ENCODE measurements at regions of chr1 and their contacts with region 1.

Region 1: GRCh38 chr1:14970115-14970798 is 183.3 kb upstream of the TMEM51 start:
- DNase-seq: peak; percentile 60 to 94
- H3K4me3 ChIP-seq: no peak overlapping the region
- H3K27ac ChIP-seq: peak overlapping the region; percentile 83 to 90
- H3K4me1 ChIP-seq: peaks cover 16 to 39% of the 10 kb centered on the region in 2 donors
- H3K27me3 ChIP-seq: no peaks in the 10 kb centered on the region
- CTCF ChIP-seq: no peak

Region 2: GRCh38 chr1:14945132-14946016 is 24.9 kb before region 1 on chr1:
- intact Hi-C with region 1: loop called (anchors 1 kb)
- DNase-seq: peak in 1 of 2 donors; percentile 85
- H3K4me3 ChIP-seq: peak overlapping the region; percentile 22 to 39
- H3K27ac ChIP-seq: peak overlapping the region; percentile 77 to 93
- H3K4me1 ChIP-seq: peaks cover 13 to 44% of the 10 kb centered on the region in 2 donors
- H3K27me3 ChIP-seq: no peaks in the 10 kb centered on the region
- CTCF ChIP-seq: no peak

Region 3: GRCh38 chr1:15337656-15338402 is 367.6 kb after region 1 on chr1:
- intact Hi-C with region 1: no loop called
- DNase-seq: peak; percentile 48 to 82
- H3K4me3 ChIP-seq: peak overlapping the region in 1 of 2 donors; percentile 20
- H3K27ac ChIP-seq: peak overlapping the region; percentile 46 to 54
- H3K4me1 ChIP-seq: peaks cover 2 to 22% of the 10 kb centered on the region in 2 donors
- H3K27me3 ChIP-seq: no peaks in the 10 kb centered on the region
- CTCF ChIP-seq: no peak

Region 4: GRCh38 chr1:15352123-15352957 is 382.1 kb after region 1 on chr1:
- intact Hi-C with region 1: no loop called
- DNase-seq: peak in 1 of 2 donors; percentile 73
- H3K4me3 ChIP-seq: no peak overlapping the region
- H3K27ac ChIP-seq: no peak overlapping the region
- H3K4me1 ChIP-seq: peaks cover 0 to 8% of the 10 kb centered on the region in 2 donors
- H3K27me3 ChIP-seq: no peaks in the 10 kb centered on the region
- CTCF ChIP-seq: no peak